ENCODE measurements at regions of chr10 and their contacts with region 1.

Region 1: GRCh38 chr10:92848441-92849233 is at the start of gene EXOC6:
- DNase-seq: peak; percentile 85
- ATAC-seq: peak; percentile 86
- total RNA-seq, gene EXOC6: 22.9 TPM

Region 2: GRCh38 chr10:92957223-92958010 is 108.8 kb after region 1 on chr10:
- intact Hi-C with region 1: loop called (anchors 10 kb)
- DNase-seq: no peak
- ATAC-seq: peak; percentile 82

Measured in sciatic nerve (tissue), 2 donors.